ENCODE measurements at regions of chr5 and their contacts with region 1.

Region 1: GRCh38 chr5:78886341-78887230 is 98.5 kb downstream of the ARSB start:
- DNase-seq: no peak
- H3K4me3 ChIP-seq: no peak overlapping the region
- H3K27ac ChIP-seq: no peak overlapping the region
- H3K4me1 ChIP-seq: no peaks in the 10 kb centered on the region
- H3K27me3 ChIP-seq: no peaks in the 10 kb centered on the region
- CTCF ChIP-seq: peak; percentile 82

Region 2: DNA sequence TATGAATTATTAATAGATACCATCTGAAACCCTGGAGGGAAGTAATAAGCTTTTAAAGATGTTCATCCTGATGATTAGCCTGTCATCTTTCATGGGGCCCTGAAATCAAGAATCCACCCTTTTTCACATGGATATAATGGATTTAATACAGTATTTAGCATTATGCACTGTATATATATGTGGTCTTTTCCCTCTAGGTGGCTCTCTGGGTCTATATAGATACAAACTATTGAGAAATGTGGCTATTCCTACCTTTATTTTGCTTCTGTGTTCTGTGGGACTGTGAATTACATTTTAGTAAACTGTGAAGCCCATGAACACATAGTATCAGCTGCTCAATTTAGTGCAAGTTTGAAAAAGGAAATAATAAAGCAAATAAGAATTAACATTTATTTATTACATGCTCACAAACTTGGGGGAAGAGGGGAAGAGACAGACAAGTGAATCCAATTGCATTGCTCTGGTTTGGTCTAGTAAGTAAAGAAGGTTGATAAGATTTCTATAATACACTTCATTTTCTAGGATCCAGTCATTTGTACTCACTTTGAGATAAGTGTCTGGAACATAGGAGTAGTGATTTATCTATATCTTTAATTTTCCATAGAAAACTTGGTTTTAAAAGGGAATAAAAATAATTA is 414.0 kb before region 1 on chr5:
- CTCF ChIA-PET with region 1: interaction called, 4 read pairs
- POLR2A ChIA-PET with region 1: no interaction called
- intact Hi-C with region 1: loop called (anchors 2 kb)
- DNase-seq: no peak
- H3K4me3 ChIP-seq: no peak overlapping the region
- H3K27ac ChIP-seq: no peak overlapping the region
- H3K4me1 ChIP-seq: no peaks in the 10 kb centered on the region
- H3K27me3 ChIP-seq: no peaks in the 10 kb centered on the region
- CTCF ChIP-seq: peak; percentile 66

Region 3: GRCh38 chr5:78699565-78700241 is 186.9 kb before region 1 on chr5:
- CTCF ChIA-PET with region 1: no interaction called
- POLR2A ChIA-PET with region 1: no interaction called
- intact Hi-C with region 1: loop called (anchors 10 kb)
- DNase-seq: peak; percentile 85 to 98
- H3K4me3 ChIP-seq: peak overlapping the region; percentile 37; the same call in 1 of the 2 replicates
- H3K27ac ChIP-seq: peak overlapping the region; percentile 99
- H3K4me1 ChIP-seq: peaks cover 38% of the 10 kb centered on the region
- H3K27me3 ChIP-seq: no peaks in the 10 kb centered on the region
- CTCF ChIP-seq: no peak